ENCODE measurements at regions of chr2 and their contacts with region 1.

Region 1: GRCh38 chr2:145379934-145380333 is 860.0 kb upstream of the ZEB2 start:
- DNase-seq: no peak
- ATAC-seq: no peak
- H3K4me3 ChIP-seq: no peak overlapping the region
- H3K4me3 Mint-ChIP-seq: no peak overlapping the region
- H3K27ac ChIP-seq: no peak overlapping the region
- H3K27ac Mint-ChIP-seq: no peak overlapping the region
- H3K4me1 ChIP-seq: no peaks in the 10 kb centered on the region
- H3K4me1 Mint-ChIP-seq: no peaks in the 10 kb centered on the region
- H3K27me3 ChIP-seq: no peaks in the 10 kb centered on the region
- H3K27me3 Mint-ChIP-seq: no peaks in the 10 kb centered on the region
- CTCF ChIP-seq: no peak

Region 2: GRCh38 chr2:144937910-144938709 is 441.8 kb before region 1 on chr2:
- CTCF ChIA-PET with region 1: no interaction called
- POLR2A ChIA-PET with region 1: no interaction called
- intact Hi-C with region 1: loop called (anchors 10 kb)
- DNase-seq: no peak
- ATAC-seq: no peak
- H3K4me3 ChIP-seq: no peak overlapping the region
- H3K4me3 Mint-ChIP-seq: no peak overlapping the region
- H3K27ac ChIP-seq: no peak overlapping the region
- H3K27ac Mint-ChIP-seq: no peak overlapping the region
- H3K4me1 ChIP-seq: no peaks in the 10 kb centered on the region
- H3K4me1 Mint-ChIP-seq: peaks cover 6% of the 10 kb centered on the region
- H3K27me3 ChIP-seq: no peaks in the 10 kb centered on the region
- H3K27me3 Mint-ChIP-seq: no peaks in the 10 kb centered on the region
- CTCF ChIP-seq: no peak

Region 3: GRCh38 chr2:145235312-145235711 is 144.6 kb before region 1 on chr2:
- CTCF ChIA-PET with region 1: no interaction called
- POLR2A ChIA-PET with region 1: no interaction called
- intact Hi-C with region 1: no loop called
- DNase-seq: no peak
- ATAC-seq: no peak
- H3K4me3 ChIP-seq: no peak overlapping the region
- H3K4me3 Mint-ChIP-seq: no peak overlapping the region
- H3K27ac ChIP-seq: no peak overlapping the region
- H3K27ac Mint-ChIP-seq: no peak overlapping the region
- H3K4me1 ChIP-seq: no peaks in the 10 kb centered on the region
- H3K4me1 Mint-ChIP-seq: no peaks in the 10 kb centered on the region
- H3K27me3 ChIP-seq: no peaks in the 10 kb centered on the region
- H3K27me3 Mint-ChIP-seq: no peaks in the 10 kb centered on the region
- CTCF ChIP-seq: no peak

Measured in B cell (primary cell).